ENCODE measurements at regions of chr22 and their contacts with region 1.

Region 1: DNA sequence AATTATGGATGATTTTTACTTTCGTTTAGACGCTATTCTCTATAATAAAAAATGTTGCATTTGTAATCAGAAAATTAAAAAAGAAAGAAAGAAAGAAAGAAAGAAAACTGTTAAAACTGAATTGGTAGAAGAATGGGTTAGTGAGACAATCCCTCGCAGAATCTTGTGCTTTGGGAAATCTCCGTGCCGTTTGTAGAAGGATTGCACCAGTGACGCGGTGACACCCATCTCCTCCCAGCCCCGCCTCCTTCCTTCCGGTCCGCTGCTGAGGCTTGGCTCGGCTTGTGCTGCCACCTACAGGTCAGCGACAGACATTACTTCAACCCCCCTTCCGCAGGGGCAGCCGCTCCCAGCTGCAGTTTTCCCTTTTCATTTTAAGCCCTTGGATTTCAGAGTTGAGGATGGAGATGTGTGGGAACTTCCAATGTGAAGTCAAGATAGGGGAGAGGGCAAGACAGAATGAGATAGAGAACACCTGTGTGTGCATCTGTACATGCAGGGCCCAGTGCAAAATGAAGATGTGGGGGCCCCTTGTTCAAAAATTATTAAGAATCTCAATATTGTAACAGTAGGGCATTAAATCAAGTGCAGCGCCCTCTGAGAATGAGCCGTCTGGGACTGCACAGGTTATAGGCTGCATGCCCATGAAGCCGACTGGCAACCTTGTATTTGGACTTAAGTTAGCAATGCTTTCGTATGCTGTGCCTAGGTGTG is 41.1 kb downstream of the TST start:
- DNase-seq: peak; percentile 94
- H3K4me3 Mint-ChIP-seq: peak overlapping the region; percentile 78
- H3K27ac Mint-ChIP-seq: peak overlapping the region; percentile 2
- H3K4me1 Mint-ChIP-seq: peaks cover 5% of the 10 kb centered on the region
- H3K27me3 Mint-ChIP-seq: no peaks in the 10 kb centered on the region

Region 2: DNA sequence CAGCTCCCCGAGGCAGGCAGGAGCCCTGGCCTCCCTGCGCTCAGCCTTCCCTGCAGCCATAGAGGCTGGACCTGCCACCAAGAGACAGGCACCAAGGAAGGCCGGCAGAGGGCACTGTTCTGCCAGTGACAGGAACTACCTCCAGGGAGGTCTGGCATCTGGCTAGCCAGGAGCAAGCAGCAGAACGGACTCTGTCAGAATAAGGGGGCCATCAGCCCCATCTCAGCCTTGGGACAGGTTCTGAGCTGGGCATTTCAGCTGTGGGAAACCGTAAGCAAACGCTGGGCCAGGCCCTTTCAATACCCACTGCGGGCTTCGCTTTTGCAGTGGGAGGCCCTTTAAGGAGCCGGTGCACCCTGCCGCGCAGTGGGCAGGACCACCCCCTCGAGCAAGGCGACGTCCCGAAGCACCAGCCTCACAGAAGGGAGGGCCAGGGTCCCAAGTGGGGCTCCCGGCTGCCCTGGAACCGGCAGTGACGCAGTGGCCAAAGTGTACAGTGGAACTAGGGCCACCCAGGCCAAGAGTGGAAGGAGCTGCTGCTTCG is 220.4 kb before region 1 on chr22:
- CTCF ChIA-PET with region 1: interaction called, 32 read pairs
- POLR2A ChIA-PET with region 1: no interaction called
- intact Hi-C with region 1: loop called (anchors 1 kb)
- DNase-seq: peak; percentile 85
- H3K4me3 Mint-ChIP-seq: no peak overlapping the region
- H3K27ac Mint-ChIP-seq: no peak overlapping the region
- H3K4me1 Mint-ChIP-seq: no peaks in the 10 kb centered on the region
- H3K27me3 Mint-ChIP-seq: peaks cover 8% of the 10 kb centered on the region

Region 3: DNA sequence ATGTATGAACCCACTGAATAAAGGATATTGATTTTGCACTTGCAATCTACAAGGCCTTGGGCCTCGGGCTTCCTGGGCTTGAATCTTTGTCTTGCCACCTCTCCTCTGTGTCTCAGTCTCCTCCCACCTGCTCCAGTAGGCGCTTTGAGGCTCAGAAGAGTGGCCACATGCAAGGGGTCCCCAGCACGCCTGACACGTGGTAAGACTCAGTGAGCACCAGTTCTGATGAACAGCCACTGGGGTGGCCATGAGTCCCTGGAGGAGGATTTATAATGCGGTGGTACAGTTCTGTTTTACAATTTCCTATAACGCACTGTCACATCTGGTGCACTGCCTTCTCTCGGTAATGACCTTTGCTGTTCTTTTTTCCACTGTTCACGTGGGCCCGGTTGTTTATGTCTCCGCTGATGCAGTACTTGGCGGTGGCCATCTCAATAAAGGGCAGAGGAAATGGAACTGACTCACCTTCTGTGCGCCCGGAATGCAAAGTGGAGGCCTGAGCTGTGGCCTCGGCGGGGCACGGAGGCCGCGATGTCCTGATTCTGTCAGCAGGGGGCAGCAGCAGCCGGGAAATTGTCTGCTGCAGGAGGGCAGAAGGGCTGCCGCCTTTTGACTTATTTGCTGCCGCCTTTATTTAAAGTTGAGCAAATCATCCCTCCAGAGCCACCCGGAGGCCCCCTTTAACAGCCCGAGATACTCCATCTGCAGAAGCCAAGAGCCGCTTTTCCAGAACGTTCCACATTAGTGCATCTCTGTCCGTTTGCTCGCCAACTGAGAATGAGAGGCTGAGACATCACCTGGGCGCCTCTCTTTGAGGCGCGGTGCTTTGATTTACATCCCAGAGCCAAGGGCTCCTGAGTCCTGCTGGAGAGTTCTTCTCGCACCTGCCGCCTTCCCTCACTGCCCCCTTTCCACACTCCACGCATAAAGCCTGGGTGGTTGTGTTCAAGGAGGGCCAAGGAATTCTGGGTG is 196.2 kb before region 1 on chr22:
- CTCF ChIA-PET with region 1: interaction called, 58 read pairs
- POLR2A ChIA-PET with region 1: interaction called, 8 read pairs
- intact Hi-C with region 1: loop called (anchors 1 kb)
- DNase-seq: peak; percentile 96
- H3K4me3 Mint-ChIP-seq: peak overlapping the region; percentile 49
- H3K27ac Mint-ChIP-seq: peak overlapping the region; percentile 76
- H3K4me1 Mint-ChIP-seq: peaks cover 32% of the 10 kb centered on the region
- H3K27me3 Mint-ChIP-seq: peaks cover 1% of the 10 kb centered on the region

Region 4: GRCh38 chr22:36873680-36874537 is 104.2 kb before region 1 on chr22:
- CTCF ChIA-PET with region 1: interaction called, 15 read pairs
- POLR2A ChIA-PET with region 1: no interaction called
- intact Hi-C with region 1: no loop called
- DNase-seq: peak; percentile 76
- H3K4me3 Mint-ChIP-seq: no peak overlapping the region
- H3K27ac Mint-ChIP-seq: peak overlapping the region; percentile 90
- H3K4me1 Mint-ChIP-seq: peaks cover 19% of the 10 kb centered on the region
- H3K27me3 Mint-ChIP-seq: no peaks in the 10 kb centered on the region

Measured in activated CD4-positive, alpha-beta memory T cell treated with anti-CD3 and anti-CD28 coated beads for 36 hours (primary cell).